ENCODE measurements at regions of chr19 and their contacts with region 1.

Region 1: GRCh38 chr19:36528194-36528920 is at the start of gene ZNF260:
- DNase-seq: peak; percentile 96 to 98 (median 97)
- H3K4me3 ChIP-seq: peak within 1 kb of the TSS; percentile 57 to 100 (median 82)
- H3K27ac ChIP-seq: peak within 1 kb of the TSS; percentile 87 to 100 (median 97)
- H3K27me3 ChIP-seq: no peaks in the 10 kb centered on the region
- CTCF ChIP-seq: peak in 14 of 56 donors; percentile 5 to 49 (median 16)
- total RNA-seq, gene ZNF260: 10.1 to 24.3 (median 14.8) TPM

Region 2: GRCh38 chr19:36420961-36421748 is 107.2 kb before region 1 on chr19:
- intact Hi-C with region 1: no loop called
- DNase-seq: peak in 8 of 10 donors; percentile 7 to 57 (median 42)
- H3K4me3 ChIP-seq: peak overlapping the region; percentile 34 to 74 (median 60)
- H3K27ac ChIP-seq: peak overlapping the region in 23 of 59 donors; percentile 4 to 75 (median 51)
- H3K27me3 ChIP-seq: no peaks in the 10 kb centered on the region
- CTCF ChIP-seq: no peak

Region 3: DNA sequence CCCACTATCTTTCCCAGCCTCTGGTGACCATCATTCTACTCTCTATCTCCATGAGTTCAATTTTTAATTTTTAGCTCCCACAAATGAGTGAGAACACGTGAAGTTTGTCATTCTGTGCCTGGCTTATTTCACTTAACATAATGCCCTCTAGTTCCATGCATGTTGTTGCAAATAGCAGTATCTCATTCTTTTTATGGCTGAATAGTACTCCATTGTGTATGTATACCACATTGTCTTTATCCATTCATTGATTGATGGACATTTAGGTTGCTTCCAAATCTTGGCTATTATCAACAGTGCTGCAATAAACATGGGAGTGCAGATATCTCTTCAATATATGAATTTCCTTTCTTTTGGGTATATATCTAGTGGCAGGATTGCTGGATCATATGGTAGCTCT is 87.0 kb before region 1 on chr19:
- intact Hi-C with region 1: no loop called
- DNase-seq: no peak
- H3K4me3 ChIP-seq: no peak overlapping the region
- H3K27ac ChIP-seq: no peak overlapping the region
- H3K27me3 ChIP-seq: no peaks in the 10 kb centered on the region
- CTCF ChIP-seq: no peak

Region 4: GRCh38 chr19:36489118-36489919 is 39.0 kb before region 1 on chr19 and contains the start of gene ZNF566:
- intact Hi-C with region 1: loop called (anchors 1 to 5 kb)
- DNase-seq: peak; percentile 78 to 95 (median 93)
- H3K4me3 ChIP-seq: peak within 1 kb of the TSS; percentile 65 to 99 (median 90)
- H3K27ac ChIP-seq: peak within 1 kb of the TSS; percentile 86 to 100 (median 97)
- H3K27me3 ChIP-seq: no peaks in the 10 kb centered on the region
- CTCF ChIP-seq: peak in 29 of 56 donors; percentile 7 to 53 (median 24)
- total RNA-seq, gene ZNF566: 14.7 to 34.4 (median 22.9) TPM

Region 5: DNA sequence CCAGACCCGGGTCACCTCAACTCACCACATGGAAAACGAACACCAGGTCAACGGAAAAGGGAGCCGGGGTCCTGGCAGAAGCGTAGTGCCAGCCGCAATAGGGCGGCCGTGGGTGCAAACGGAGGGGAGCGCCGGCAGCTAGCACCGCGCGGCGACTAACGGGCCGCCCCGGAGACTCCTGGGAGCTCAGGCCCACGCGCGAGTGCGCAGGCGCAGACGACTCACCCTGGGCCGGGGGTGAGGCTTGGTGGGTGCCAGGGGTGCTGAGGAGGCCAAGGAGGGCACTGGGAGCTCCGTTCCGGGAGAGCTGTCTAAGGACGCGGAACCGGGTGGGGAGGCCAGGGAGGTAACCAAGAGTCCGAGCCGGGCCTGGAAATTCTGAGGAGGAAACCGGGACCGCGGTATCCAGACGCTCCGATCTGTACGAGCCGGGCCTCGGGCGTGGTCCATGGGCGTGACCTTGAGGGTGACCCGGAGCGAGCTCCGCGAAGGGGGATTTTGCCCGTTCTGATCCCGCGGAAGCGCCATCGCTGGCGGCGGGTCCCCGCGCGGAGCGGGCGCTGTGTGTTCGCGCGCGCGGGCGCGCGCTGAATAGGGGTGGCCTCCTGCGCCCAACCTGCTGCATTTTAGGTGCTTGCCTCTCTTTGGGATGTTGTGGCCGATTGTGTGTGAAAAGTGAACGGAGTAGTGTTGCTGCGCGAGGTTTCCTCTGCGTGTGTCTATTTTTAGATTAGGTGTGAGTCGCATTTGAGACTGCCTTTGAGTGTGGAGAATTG is 76.9 kb after region 1 on chr19 and contains the start of gene ZNF382:
- intact Hi-C with region 1: loop called in 1 of 2 experiments (anchors 2 kb)
- DNase-seq: peak; percentile 68 to 89 (median 76)
- H3K4me3 ChIP-seq: peak within 1 kb of the TSS; percentile 45 to 97 (median 90)
- H3K27ac ChIP-seq: peak within 1 kb of the TSS; percentile 58 to 98 (median 92)
- H3K27me3 ChIP-seq: no peaks in the 10 kb centered on the region
- CTCF ChIP-seq: peak in 1 of 56 donors; percentile 14
- total RNA-seq, gene ZNF382: 32.5 to 84.9 (median 57.0) TPM

Region 6: GRCh38 chr19:36772311-36773222 is 244.2 kb after region 1 on chr19 and contains the start of gene ZNF850:
- intact Hi-C with region 1: loop called in 1 of 2 experiments (anchors 5 kb)
- DNase-seq: peak; percentile 89 to 97 (median 94)
- H3K4me3 ChIP-seq: peak within 1 kb of the TSS; percentile 55 to 100 (median 88)
- H3K27ac ChIP-seq: peak within 1 kb of the TSS in 57 of 59 donors; percentile 7 to 97 (median 88)
- H3K27me3 ChIP-seq: no peaks in the 10 kb centered on the region
- CTCF ChIP-seq: peak in 14 of 56 donors; percentile 3 to 44 (median 20)
- total RNA-seq, gene ZNF850: 0.84 to 5.1 (median 1.8) TPM

Region 7: GRCh38 chr19:36850559-36851442 is 322.4 kb after region 1 on chr19 and contains the start of gene ZNF345:
- intact Hi-C with region 1: loop called in 1 of 2 experiments (anchors 10 kb)
- DNase-seq: peak; percentile 80 to 95 (median 94)
- H3K4me3 ChIP-seq: peak within 1 kb of the TSS; percentile 63 to 99 (median 89)
- H3K27ac ChIP-seq: peak within 1 kb of the TSS; percentile 79 to 98 (median 94)
- H3K27me3 ChIP-seq: no peaks in the 10 kb centered on the region
- CTCF ChIP-seq: peak in 7 of 56 donors; percentile 5 to 17 (median 10)
- total RNA-seq, gene ZNF345: 4.2 to 23.2 (median 10.2) TPM